ENCODE measurements at regions of chr1 and their contacts with region 1.

Region 1: DNA sequence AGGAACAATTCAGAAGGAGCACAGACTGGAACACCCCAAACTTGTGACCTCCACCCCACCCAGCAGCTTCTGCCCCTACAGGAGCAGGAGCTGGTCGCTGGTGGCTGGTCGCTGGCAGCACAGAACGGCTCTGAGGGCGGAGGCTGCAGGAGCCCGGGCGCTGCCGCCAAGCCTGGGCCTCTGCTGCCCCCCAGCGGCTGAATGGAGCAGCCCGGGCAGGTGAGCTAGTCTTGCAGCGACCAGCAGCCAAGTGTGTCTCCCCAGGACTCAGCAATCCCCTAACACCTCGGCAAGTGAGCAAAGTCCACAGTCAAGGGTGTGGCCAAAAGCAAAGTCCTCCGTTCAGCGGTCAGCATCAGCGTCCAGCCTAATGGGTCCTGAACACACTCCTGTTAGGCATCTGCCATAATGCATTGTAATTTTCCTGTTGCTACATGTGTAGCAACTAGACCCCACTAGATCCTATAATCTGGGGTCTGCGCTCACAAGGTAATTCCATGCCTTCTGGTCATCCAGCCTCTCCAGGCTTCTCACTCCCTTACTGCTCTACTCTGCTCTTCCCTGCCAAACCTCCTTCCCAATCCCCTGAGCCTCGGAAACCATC is 12.1 kb upstream of the GJB5 start:
- DNase-seq: peak; percentile 74 to 91 (median 87)
- ATAC-seq: peak; percentile 96
- H3K4me3 ChIP-seq: no peak overlapping the region
- H3K4me1 ChIP-seq: no peaks in the 10 kb centered on the region
- CTCF ChIP-seq: peak; percentile 92

Region 2: DNA sequence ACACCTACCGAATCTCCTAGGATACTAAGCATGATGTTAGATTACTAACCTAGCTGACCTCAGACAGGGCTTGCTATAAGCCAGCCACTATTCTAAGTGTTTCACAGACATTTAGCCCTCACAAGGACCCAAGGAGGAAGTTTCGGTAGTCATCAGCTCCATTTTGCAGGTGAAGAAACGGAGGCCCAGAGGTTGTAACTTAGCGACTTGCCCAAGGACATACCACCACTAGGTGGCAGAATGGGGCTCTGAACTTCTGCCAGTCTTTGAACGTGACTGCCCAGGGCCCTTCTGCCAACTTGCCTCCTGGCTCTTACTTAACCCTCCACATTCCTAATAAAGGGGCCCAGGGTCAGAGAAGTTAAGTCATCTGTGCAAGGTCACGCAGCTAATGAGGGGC is 282.6 kb before region 1 on chr1:
- intact Hi-C with region 1: loop called in 1 of 2 experiments (anchors 2 kb)
- DNase-seq: peak in 2 of 3 donors; percentile 42 to 73
- ATAC-seq: peak; percentile 63
- H3K4me3 ChIP-seq: no peak overlapping the region
- H3K4me1 ChIP-seq: no peaks in the 10 kb centered on the region
- CTCF ChIP-seq: peak; percentile 28